ENCODE measurements at regions of chr5 and their contacts with region 1.

Region 1: DNA sequence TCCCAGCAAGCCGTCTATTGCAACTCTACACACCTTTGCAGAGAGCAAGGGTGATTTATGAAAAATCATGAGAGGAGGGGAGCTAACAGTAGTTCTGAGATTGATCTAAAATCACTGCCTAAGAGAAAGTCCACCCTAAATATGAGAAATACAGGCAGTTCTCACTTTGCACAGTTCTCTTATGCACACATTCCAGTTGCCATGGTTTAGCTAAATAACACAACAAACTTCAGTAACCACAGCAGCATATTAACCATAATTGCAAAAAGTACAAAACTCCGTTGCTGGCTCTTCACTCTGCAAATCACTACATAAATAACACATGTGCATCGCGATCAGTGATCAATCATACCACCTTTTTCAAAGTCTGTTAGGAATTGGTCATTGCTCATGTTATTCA is 31.1 kb downstream of the PGGT1B start:
- DNase-seq: no peak
- H3K4me3 ChIP-seq: no peak overlapping the region
- CTCF ChIP-seq: no peak

Region 2: DNA sequence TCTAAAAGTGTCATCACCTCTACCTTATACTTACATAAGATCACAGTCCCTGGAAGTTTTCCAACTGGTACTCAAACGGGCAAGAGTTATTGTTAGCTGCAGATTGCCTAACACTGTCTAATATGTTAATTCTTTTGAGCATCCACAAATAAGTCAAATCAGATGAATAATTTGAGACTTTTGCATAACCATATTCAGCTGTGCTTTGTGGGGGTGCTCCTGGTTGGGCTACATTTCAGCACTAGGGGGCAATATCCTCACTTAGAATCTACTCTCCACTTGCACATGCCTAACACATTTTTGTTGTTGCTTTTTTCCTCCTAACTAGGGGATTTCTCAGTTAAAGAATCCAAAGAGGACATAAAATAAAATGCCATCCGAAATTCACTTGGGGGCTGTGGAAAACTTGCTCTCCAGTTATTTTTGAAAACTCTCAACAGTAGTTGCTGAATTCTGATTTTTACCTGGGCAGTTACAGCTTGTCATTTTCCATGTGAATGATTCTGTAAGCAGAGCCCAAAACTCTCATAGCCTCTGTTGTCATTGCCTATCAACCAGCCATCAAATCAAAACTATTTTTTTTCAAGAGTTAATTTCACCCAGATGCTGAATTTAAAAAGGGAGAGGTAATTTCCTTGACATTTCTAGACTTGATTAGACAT is 133.4 kb before region 1 on chr5:
- in situ Hi-C with region 1: loop called (anchors 10 kb)
- DNase-seq: peak; percentile 34
- H3K4me3 ChIP-seq: no peak overlapping the region
- CTCF ChIP-seq: peak; percentile 80

Region 3: GRCh38 chr5:115262321-115263077 is 30.9 kb after region 1 on chr5 and contains the start of gene PGGT1B:
- in situ Hi-C with region 1: no loop called
- DNase-seq: peak; percentile 11
- H3K4me3 ChIP-seq: peak within 1 kb of the TSS; percentile 95
- CTCF ChIP-seq: no peak

Measured in astrocyte of the cerebellum (primary cell).